OCI-LY7 (cell line): ENCODE measurements at regions of chr15 and their contacts with region 1.

Region 1: GRCh38 chr15:29863438-29863837 is 41.2 kb upstream of the TJP1 start:
- DNase-seq: no peak
- H3K4me3 ChIP-seq: no peak overlapping the region
- H3K27ac ChIP-seq: no peak overlapping the region
- H3K4me1 ChIP-seq: no peaks in the 10 kb centered on the region
- CTCF ChIP-seq: no peak

Region 2: GRCh38 chr15:29900237-29901189 is 37.1 kb after region 1 on chr15:
- CTCF ChIA-PET with region 1: no interaction called
- POLR2A ChIA-PET with region 1: no interaction called
- intact Hi-C with region 1: loop called (anchors 2 kb)
- DNase-seq: no peak
- H3K4me3 ChIP-seq: no peak overlapping the region
- H3K27ac ChIP-seq: no peak overlapping the region
- H3K4me1 ChIP-seq: no peaks in the 10 kb centered on the region
- CTCF ChIP-seq: no peak